ENCODE measurements at regions of chr19 and their contacts with region 1.

Region 1: GRCh38 chr19:9934132-9934950 is 2.0 kb downstream of the OLFM2 start:
- DNase-seq: peak; percentile 91
- H3K4me3 Mint-ChIP-seq: no peak overlapping the region
- H3K27ac Mint-ChIP-seq: no peak overlapping the region
- H3K4me1 Mint-ChIP-seq: peaks cover 28% of the 10 kb centered on the region
- H3K27me3 Mint-ChIP-seq: peaks cover 56% of the 10 kb centered on the region

Region 2: GRCh38 chr19:10027158-10027693 is 92.9 kb after region 1 on chr19:
- CTCF ChIA-PET with region 1: interaction called, 62 read pairs
- intact Hi-C with region 1: loop called (anchors 1 kb)
- DNase-seq: no peak
- H3K4me3 Mint-ChIP-seq: no peak overlapping the region
- H3K27ac Mint-ChIP-seq: no peak overlapping the region
- H3K4me1 Mint-ChIP-seq: peaks cover 2% of the 10 kb centered on the region
- H3K27me3 Mint-ChIP-seq: peaks cover 13% of the 10 kb centered on the region

Region 3: DNA sequence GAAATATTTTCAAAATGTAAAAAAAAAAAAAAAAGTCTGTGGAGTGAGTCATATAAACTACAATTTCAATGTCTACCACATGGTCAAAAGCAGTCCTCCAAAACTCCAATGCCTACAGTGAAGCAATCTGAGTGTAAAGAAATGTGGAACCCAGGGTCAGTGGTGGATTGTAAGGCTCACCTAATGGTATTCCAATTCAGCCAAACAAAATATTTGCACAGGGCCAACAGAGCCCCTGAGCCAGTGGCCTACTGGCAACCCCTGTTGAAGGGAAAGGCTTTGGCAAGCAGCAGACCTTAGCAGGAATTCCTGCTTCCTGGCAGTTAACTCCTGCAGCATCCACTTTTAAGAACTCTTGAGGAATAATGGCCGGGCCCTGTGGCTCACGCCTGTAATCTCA is 257.0 kb after region 1 on chr19:
- CTCF ChIA-PET with region 1: no interaction called
- intact Hi-C with region 1: no loop called
- DNase-seq: no peak
- H3K4me3 Mint-ChIP-seq: no peak overlapping the region
- H3K27ac Mint-ChIP-seq: no peak overlapping the region
- H3K4me1 Mint-ChIP-seq: peaks cover 51% of the 10 kb centered on the region
- H3K27me3 Mint-ChIP-seq: no peaks in the 10 kb centered on the region

Region 4: GRCh38 chr19:10388957-10389356 is 454.6 kb after region 1 on chr19:
- CTCF ChIA-PET with region 1: no interaction called
- intact Hi-C with region 1: loop called (anchors 2 kb)
- DNase-seq: peak; percentile 91
- H3K4me3 Mint-ChIP-seq: no peak overlapping the region
- H3K27ac Mint-ChIP-seq: no peak overlapping the region
- H3K4me1 Mint-ChIP-seq: no peaks in the 10 kb centered on the region
- H3K27me3 Mint-ChIP-seq: no peaks in the 10 kb centered on the region